OCI-LY7 (cell line): ENCODE measurements at regions of chr7 and their contacts with region 1.

Region 1: DNA sequence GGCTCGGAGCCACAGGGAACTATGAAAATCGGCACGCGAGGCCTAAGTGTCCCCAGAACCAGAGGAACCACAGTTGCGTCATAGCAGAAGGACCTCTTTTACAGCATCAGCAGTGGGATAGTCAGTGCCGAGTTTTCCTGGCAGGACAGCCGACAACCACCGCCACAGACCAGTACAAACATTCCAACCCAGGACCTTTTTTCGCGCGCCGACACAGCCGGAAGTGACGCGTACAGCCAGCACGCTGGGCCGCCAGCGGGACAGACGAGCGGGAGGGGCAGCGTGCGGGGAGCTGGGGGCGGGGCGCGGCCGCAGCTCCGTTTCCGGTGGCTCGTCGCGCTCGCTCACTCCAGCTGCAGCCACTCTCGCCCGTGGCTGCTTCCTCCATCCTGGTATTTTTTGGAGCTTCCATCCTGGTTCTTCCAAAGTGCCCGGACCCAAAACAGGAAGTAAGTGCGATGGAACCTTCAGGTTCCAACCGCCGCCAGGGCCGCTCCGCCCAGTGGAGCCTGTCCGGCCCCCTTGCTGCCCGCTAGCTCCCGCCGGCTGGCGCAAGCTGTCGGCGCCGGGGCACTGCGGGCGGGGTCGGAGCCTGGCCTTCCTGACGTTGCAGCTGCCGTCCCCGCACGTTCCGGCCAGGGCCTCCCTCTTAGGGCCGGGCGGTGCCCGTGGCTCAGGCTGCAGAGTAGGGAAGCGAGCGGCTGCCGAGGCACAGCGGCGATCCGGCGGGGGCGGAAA is at the start of gene DMTF1:
- DNase-seq: peak; percentile 93
- H3K4me3 ChIP-seq: peak within 1 kb of the TSS; percentile 93
- H3K27ac ChIP-seq: peak within 1 kb of the TSS; percentile 81
- H3K4me1 ChIP-seq: peaks cover 46% of the 10 kb centered on the region
- CTCF ChIP-seq: no peak
- total RNA-seq, gene DMTF1: 111 and 123 TPM in 2 replicates

Region 2: DNA sequence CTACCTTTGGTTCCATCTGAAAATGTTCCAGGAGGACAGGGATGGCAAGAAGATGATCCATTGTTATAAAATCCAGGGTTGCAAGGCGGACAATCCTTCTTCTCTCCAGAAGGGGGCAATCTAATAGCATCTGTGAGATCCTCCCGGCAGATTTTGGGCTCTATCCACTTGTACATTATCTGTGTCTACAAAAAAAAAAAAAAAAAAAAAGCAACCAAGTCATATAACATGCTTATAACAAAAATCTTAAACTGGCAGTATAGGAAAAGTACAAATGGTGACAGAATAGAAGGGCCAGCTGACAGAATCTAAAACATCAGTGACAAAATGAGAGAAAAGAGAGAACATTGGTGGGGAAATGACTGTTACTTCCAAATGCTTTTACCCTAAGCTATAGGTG is 225.5 kb before region 1 on chr7:
- CTCF ChIA-PET with region 1: interaction called, 6 read pairs
- POLR2A ChIA-PET with region 1: interaction called, 12 read pairs
- intact Hi-C with region 1: loop called (anchors 1 kb)
- DNase-seq: peak; percentile 68
- H3K4me3 ChIP-seq: no peak overlapping the region
- H3K27ac ChIP-seq: no peak overlapping the region
- H3K4me1 ChIP-seq: peaks cover 9% of the 10 kb centered on the region
- CTCF ChIP-seq: peak; percentile 89

Region 3: GRCh38 chr7:87059525-87060287 is 92.6 kb before region 1 on chr7 and contains the start of gene ELAPOR2:
- CTCF ChIA-PET with region 1: no interaction called
- POLR2A ChIA-PET with region 1: interaction called, 13 read pairs
- intact Hi-C with region 1: loop called (anchors 2 kb)
- DNase-seq: peak; percentile 87
- H3K4me3 ChIP-seq: peak within 1 kb of the TSS; percentile 85
- H3K27ac ChIP-seq: peak within 1 kb of the TSS; percentile 5
- H3K4me1 ChIP-seq: peaks cover 17% of the 10 kb centered on the region
- CTCF ChIP-seq: peak; percentile 70
- total RNA-seq, gene ELAPOR2: 4.1 and 4.6 TPM in 2 replicates

Region 4: GRCh38 chr7:87129848-87130247 is 22.4 kb before region 1 on chr7:
- CTCF ChIA-PET with region 1: no interaction called
- POLR2A ChIA-PET with region 1: no interaction called
- intact Hi-C with region 1: no loop called
- DNase-seq: no peak
- H3K4me3 ChIP-seq: no peak overlapping the region
- H3K27ac ChIP-seq: no peak overlapping the region
- H3K4me1 ChIP-seq: no peaks in the 10 kb centered on the region
- CTCF ChIP-seq: no peak

Region 5: GRCh38 chr7:87213811-87214210 is 61.5 kb after region 1 on chr7:
- CTCF ChIA-PET with region 1: interaction called, 8 read pairs
- POLR2A ChIA-PET with region 1: interaction called, 192 read pairs
- intact Hi-C with region 1: loop called (anchors 1 kb)
- DNase-seq: no peak
- H3K4me3 ChIP-seq: peak overlapping the region; percentile 82
- H3K27ac ChIP-seq: peak overlapping the region; percentile 98
- H3K4me1 ChIP-seq: peaks cover 63% of the 10 kb centered on the region
- CTCF ChIP-seq: no peak

Region 6: DNA sequence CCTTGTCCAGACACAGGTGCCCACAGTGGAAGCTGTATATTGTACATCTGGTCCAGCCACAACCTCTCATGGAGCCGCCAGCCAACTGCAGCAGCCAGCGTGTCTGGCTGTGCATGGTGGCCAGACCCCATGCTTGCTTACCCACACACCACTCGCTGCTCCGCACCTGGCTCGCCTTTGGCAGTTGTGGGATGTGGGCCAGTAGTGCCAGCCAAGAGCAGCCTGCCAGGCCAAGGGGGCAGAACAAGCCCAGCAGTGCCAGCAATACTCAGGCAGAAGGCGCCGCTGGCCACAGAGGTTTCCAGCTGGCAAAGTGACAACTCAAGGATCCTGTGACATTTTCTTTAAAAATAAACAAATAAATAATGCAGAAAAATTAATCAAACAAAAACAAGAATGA is 79.0 kb after region 1 on chr7:
- CTCF ChIA-PET with region 1: no interaction called
- POLR2A ChIA-PET with region 1: interaction called, 4 read pairs
- intact Hi-C with region 1: loop called (anchors 5 kb)
- DNase-seq: no peak
- H3K4me3 ChIP-seq: no peak overlapping the region
- H3K27ac ChIP-seq: no peak overlapping the region
- H3K4me1 ChIP-seq: peaks cover 10% of the 10 kb centered on the region
- CTCF ChIP-seq: no peak

Region 7: DNA sequence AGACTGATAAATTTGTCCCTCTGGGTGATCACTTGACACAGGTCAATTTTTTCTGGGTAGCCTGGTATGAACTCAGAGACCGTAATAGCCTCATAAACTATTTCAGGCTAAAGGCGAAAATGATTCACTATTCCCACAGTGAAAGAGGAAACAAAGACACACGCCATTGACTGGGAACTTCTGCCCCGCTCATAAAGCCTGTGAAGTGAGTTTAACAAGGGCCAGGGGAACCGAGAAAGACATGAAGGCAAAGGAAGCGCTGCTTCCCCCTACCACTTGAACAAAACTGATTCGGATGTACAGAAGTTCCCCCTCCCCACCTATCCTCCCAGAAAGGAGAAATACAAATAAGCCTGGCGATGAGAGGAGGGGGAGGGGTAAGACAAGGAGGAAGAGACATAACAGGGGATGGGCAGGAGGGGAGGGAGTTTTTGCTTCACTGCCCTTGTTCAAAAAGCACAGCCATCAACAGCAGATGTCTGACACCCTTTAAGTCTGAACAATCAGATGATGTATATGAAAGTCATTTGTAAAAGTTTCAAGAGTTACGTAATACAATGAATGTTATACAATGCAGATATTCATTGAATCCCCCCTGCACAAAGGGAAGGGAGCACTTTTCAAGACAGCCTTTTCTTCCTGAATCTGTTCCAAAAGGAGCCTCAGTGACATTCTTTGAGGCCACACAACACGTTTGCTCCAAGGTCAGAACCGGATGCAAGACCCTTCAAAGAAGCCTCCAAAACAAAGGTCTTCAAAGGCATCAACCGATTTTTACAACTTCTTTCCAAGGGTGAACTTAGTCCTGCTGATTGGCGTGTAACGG is 322.5 kb after region 1 on chr7:
- CTCF ChIA-PET with region 1: no interaction called
- POLR2A ChIA-PET with region 1: no interaction called
- intact Hi-C with region 1: loop called (anchors 5 kb)
- DNase-seq: peak; percentile 82
- H3K4me3 ChIP-seq: peak overlapping the region; percentile 62
- H3K27ac ChIP-seq: peak overlapping the region; percentile 26
- H3K4me1 ChIP-seq: peaks cover 18% of the 10 kb centered on the region
- CTCF ChIP-seq: no peak